Aorta (tissue), 5 donors: ENCODE measurements at regions of chr1 and their contacts with region 1.

Region 1: GRCh38 chr1:65687428-65688214 is 105.1 kb upstream of the PDE4B start:
- DNase-seq: peak; percentile 88 to 92
- ATAC-seq: peak; percentile 93
- H3K4me3 ChIP-seq: no peak overlapping the region
- H3K27ac ChIP-seq: no peak overlapping the region
- H3K4me1 ChIP-seq: peaks cover 3 to 5% of the 10 kb centered on the region in 2 donors
- H3K27me3 ChIP-seq: no peaks in the 10 kb centered on the region

Region 2: GRCh38 chr1:65075123-65075976 is 612.3 kb before region 1 on chr1:
- intact Hi-C with region 1: loop called in 1 of 2 experiments (anchors 5 kb)
- DNase-seq: peak in 1 of 2 donors; percentile 58
- ATAC-seq: peak; percentile 82
- H3K4me3 ChIP-seq: no peak overlapping the region
- H3K27ac ChIP-seq: no peak overlapping the region
- H3K4me1 ChIP-seq: no peaks in the 10 kb centered on the region
- H3K27me3 ChIP-seq: no peaks in the 10 kb centered on the region

Region 3: GRCh38 chr1:65235867-65236805 is 451.5 kb before region 1 on chr1:
- intact Hi-C with region 1: loop called (anchors 5 kb)
- DNase-seq: no peak
- ATAC-seq: no peak
- H3K4me3 ChIP-seq: no peak overlapping the region
- H3K27ac ChIP-seq: no peak overlapping the region
- H3K4me1 ChIP-seq: no peaks in the 10 kb centered on the region
- H3K27me3 ChIP-seq: no peaks in the 10 kb centered on the region

Region 4: DNA sequence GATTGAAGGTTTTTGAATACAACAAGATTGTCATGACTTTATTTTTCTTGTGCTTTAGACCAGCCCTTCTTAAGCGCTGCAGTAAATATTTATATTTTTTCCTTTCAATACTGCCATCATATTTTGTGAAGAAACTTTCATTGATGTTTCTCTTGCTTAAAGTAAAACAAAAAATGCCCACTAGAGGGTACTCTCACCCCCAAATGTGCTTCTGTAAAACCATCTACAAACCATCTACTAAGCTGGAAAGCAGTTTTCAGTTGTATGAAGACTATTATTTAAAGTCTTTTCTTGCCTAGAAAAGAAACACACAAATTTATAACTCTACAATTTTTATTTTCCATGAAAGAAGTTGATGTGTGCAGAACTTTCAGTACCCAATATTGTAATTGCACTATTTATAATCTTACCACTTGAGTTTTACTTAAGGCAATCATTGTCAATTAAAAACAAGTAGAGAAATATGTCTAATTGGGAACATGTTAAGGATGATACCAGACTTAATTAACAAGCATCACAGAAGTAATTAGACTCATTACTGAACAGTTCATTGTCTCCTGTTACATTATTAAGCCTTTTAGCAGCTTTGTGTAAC is 256.4 kb before region 1 on chr1:
- intact Hi-C with region 1: loop called in 1 of 2 experiments (anchors 5 kb)
- DNase-seq: no peak
- ATAC-seq: no peak
- H3K4me3 ChIP-seq: no peak overlapping the region
- H3K27ac ChIP-seq: no peak overlapping the region
- H3K4me1 ChIP-seq: peaks cover 0 to 1% of the 10 kb centered on the region in 2 donors
- H3K27me3 ChIP-seq: no peaks in the 10 kb centered on the region